Aorta (tissue), 5 donors: ENCODE measurements at regions of chr14 and their contacts with region 1.

Region 1: DNA sequence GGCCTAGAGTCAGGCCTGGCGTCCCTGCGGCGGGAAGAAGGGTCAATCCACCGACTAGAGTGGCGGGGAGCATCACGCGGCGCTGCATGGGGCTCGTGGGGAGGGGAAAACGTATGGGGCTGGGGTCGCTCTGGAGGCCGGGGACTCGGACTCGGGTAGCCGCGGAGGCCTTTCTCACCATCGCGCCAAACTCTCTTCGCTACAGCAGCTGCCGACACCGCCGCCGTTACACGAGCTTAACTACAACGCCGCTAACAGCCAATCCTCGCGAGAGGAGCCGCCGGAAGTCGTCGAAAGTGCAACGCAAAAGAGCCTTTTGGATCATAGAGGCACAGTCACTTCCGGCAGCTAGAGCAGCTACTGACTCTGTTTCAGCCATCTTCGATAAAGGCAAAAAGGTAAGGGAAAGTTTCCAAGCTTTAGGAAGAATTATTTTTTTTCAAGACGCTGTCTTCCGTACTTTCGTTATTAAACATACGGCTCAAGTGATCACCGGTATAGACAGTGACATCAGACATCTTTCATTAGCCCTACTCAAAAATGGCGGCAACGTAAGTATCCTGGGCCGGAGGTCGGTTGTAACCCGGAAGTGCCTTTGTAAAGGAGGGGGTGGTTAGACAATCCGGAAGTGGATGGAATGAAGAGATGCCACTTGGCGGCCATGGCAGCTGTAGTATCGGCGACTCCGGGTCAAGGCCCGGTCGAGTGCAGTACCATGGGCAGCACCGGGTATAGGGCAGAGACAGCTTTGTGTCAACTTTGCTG is at the starts of genes ERH and SLC39A9:
- DNase-seq: peak; percentile 98 to 99
- ATAC-seq: peak; percentile 99
- H3K4me3 ChIP-seq: peak within 1 kb of the TSS; percentile 77 to 96
- H3K27ac ChIP-seq: peak within 1 kb of the TSS; percentile 44 to 66
- H3K4me1 ChIP-seq: no peaks in the 10 kb centered on the region
- H3K27me3 ChIP-seq: no peaks in the 10 kb centered on the region
- total RNA-seq, gene ERH: 100 to 133 TPM
- total RNA-seq, gene SLC39A9: 39.0 to 44.3 TPM

Region 2: GRCh38 chr14:69317104-69317755 is 81.0 kb before region 1 on chr14:
- intact Hi-C with region 1: loop called in 1 of 2 experiments (anchors 5 kb)
- DNase-seq: peak; percentile 81 to 84
- ATAC-seq: peak; percentile 90
- H3K4me3 ChIP-seq: no peak overlapping the region
- H3K27ac ChIP-seq: peak overlapping the region in 1 of 2 donors; percentile 4
- H3K4me1 ChIP-seq: no peaks in the 10 kb centered on the region
- H3K27me3 ChIP-seq: no peaks in the 10 kb centered on the region